A673 (cell line): ENCODE measurements at regions of chr22 and their contacts with region 1.

Region 1: GRCh38 chr22:25048659-25049647 is 96.4 kb downstream of the KIAA1671 start:
- DNase-seq: peak; percentile 71
- H3K4me3 ChIP-seq: no peak overlapping the region
- H3K27ac ChIP-seq: no peak overlapping the region
- H3K4me1 ChIP-seq: no peaks in the 10 kb centered on the region
- H3K27me3 ChIP-seq: no peaks in the 10 kb centered on the region
- CTCF ChIP-seq: peak; percentile 91

Region 2: DNA sequence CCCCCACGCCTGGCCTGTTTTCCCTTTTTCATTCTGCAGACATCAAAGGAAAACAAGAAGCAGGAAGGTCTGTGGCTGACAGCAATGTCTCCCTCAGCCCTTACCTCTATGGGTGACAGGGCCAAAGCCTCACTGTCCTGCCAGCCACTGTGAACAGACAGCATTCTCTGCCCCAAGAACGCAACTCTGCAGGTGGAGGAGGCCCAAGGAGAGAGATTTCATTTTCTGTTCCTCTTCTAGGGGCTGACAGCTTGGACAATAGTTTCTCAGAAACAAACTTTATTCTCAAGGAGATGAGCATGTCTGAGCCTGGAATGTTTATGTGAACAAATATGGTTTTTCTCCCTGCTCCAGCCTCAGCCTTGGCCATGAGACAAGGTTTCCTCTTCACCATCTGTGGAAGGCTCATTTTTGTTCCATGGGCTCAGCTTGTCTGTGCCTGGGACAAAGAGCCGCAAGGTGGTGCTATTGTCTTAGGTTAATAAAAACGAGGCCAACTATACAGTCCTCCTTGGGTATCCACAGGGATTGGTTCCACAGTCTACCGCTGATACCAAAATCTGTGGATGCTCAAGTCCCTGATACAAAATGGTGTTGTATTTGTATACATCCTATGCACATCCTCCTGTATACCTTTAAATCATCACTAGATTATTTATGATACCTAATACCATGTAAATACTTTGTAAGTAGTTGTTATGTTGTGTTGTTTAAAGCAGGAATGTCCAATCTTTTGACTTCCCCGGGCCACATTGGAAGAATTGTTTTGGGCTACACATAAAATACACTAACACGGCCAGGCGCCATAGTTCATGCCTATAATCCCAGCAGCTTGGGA is 280.2 kb before region 1 on chr22:
- CTCF ChIA-PET with region 1: no interaction called
- POLR2A ChIA-PET with region 1: no interaction called
- intact Hi-C with region 1: loop called (anchors 5 kb)
- DNase-seq: peak; percentile 72
- H3K4me3 ChIP-seq: no peak overlapping the region
- H3K27ac ChIP-seq: no peak overlapping the region
- H3K4me1 ChIP-seq: no peaks in the 10 kb centered on the region
- H3K27me3 ChIP-seq: no peaks in the 10 kb centered on the region
- CTCF ChIP-seq: peak; percentile 83

Region 3: DNA sequence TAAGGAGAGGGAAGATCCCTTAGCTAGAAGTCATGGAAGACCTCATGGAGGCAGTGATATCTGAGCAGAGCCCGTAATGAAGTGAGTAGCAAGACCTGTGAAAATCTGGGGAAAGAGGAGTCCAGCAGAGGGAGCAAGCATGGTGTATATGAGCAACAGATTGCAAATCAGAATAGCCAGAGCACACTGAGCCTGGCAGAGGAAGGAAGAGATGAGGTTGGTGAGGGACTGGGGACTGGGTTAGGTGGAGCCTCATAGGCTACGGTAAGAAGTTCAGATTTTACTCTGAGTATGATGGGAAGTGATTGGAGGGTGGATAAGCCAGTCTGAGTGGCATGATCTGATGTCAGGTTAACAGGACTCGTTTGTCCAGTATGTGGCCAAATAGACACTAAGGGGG is 111.8 kb before region 1 on chr22:
- CTCF ChIA-PET with region 1: interaction called, 9 read pairs
- POLR2A ChIA-PET with region 1: interaction called, 9 read pairs
- intact Hi-C with region 1: loop called (anchors 1 kb)
- DNase-seq: peak; percentile 42
- H3K4me3 ChIP-seq: no peak overlapping the region
- H3K27ac ChIP-seq: no peak overlapping the region
- H3K4me1 ChIP-seq: no peaks in the 10 kb centered on the region
- H3K27me3 ChIP-seq: no peaks in the 10 kb centered on the region
- CTCF ChIP-seq: peak; percentile 48; the same call in 1 of the 2 replicates

Region 4: DNA sequence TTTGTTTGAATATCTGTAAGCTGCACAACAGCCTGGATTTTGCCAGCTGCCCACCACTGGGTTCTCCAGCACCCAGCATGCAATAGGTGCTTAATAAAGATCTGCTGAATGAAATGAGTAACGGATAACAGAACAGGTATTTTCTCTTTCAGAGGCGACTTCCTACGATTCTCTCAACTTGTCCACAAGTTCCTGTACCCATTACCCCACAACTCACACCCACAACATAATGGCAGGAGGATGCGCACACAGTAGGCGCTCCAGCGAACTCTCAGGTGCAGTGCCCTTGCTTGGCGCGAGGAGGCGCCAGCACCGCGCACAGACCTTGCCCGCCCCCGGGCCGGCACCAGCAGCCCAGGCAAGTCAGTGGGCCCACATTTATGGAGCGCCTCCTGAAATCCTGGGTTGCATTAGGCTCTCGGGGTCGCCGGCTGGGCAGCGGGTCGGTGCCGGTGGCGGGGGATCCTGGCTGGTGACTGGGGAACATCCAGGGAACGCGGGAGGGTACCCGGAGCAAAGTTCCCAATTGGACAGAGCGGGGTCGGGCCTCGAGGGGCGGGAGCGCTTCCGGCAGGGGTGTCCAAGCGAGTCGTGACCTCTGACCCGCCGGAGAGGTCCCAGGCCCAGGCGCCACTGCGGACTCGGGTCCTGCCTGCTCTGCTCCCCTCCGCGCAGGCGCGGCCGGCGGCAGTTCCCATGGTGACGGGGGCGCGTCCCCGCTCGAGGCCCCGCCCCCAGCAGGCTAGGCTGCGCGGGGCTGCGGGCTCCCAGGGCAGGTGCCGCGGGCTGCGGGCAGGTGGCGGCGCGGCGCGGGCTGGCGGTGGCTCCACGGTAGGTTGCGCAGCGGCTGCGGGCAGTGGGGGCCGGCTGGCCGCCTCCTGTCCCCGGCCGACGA is 96.8 kb before region 1 on chr22 and contains the start of gene KIAA1671:
- CTCF ChIA-PET with region 1: interaction called, 5 read pairs
- POLR2A ChIA-PET with region 1: no interaction called
- intact Hi-C with region 1: loop called (anchors 1 kb)
- DNase-seq: peak; percentile 84
- H3K4me3 ChIP-seq: peak within 1 kb of the TSS; percentile 69
- H3K27ac ChIP-seq: peak within 1 kb of the TSS; percentile 58
- H3K4me1 ChIP-seq: peaks cover 11% of the 10 kb centered on the region
- H3K27me3 ChIP-seq: no peaks in the 10 kb centered on the region
- CTCF ChIP-seq: peak; percentile 99
- total RNA-seq, gene KIAA1671: 12.8 and 15.0 TPM in 2 replicates